ENCODE measurements at regions of chr2 and their contacts with region 1.

Region 1: GRCh38 chr2:24360050-24360962 is at the start of gene ITSN2:
- DNase-seq: peak; percentile 83 to 93 (median 87)
- ATAC-seq: peak; percentile 68 to 95 (median 88)
- H3K4me3 ChIP-seq: peak within 1 kb of the TSS; percentile 64 to 100 (median 96)
- H3K27ac ChIP-seq: peak within 1 kb of the TSS; percentile 79 to 99 (median 98)
- H3K4me1 ChIP-seq: peaks cover 0 to 35% (median 21%) of the 10 kb centered on the region in 12 donors
- H3K27me3 ChIP-seq: no peaks in the 10 kb centered on the region
- CTCF ChIP-seq: no peak
- POLR2A ChIP-seq: peak in 1 of 2 donors; percentile 59
- total RNA-seq, gene ITSN2: 30.6 to 55.0 (median 40.0) TPM

Region 2: GRCh38 chr2:24276349-24276899 is 83.9 kb before region 1 on chr2:
- intact Hi-C with region 1: no loop called
- DNase-seq: no peak
- ATAC-seq: peak in 1 of 4 donors; percentile 32
- H3K4me3 ChIP-seq: no peak overlapping the region
- H3K27ac ChIP-seq: no peak overlapping the region
- H3K4me1 ChIP-seq: peaks cover 0 to 31% (median 10%) of the 10 kb centered on the region in 12 donors
- H3K27me3 ChIP-seq: no peaks in the 10 kb centered on the region
- CTCF ChIP-seq: no peak
- POLR2A ChIP-seq: no peak

Region 3: DNA sequence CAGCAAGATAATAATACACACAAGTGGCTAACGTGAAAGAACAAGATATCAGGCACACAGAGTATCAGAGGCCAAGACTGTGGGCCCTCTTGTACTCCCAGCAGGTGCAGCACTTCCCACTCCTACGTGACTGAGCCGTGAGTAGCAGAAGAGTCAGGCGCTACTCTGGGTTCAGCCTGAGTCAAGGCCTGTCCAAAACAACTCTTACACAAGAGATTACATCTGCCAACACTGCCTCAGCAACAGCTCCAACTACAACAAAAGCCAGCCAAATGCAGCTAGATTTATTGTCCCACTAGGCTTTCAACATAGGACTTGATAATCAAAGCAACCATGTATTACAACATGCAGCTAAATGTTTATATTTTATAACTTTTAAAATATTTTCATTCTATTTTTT is 56.2 kb before region 1 on chr2:
- intact Hi-C with region 1: loop called in 2 of 10 experiments (anchors 5 to 10 kb)
- DNase-seq: peak; percentile 61 to 90 (median 67)
- ATAC-seq: peak; percentile 99 to 100 (median 100)
- H3K4me3 ChIP-seq: no peak overlapping the region
- H3K27ac ChIP-seq: peak overlapping the region in 11 of 12 donors; percentile 18 to 79 (median 35)
- H3K4me1 ChIP-seq: peaks cover 0 to 17% (median 7%) of the 10 kb centered on the region in 12 donors
- H3K27me3 ChIP-seq: no peaks in the 10 kb centered on the region
- CTCF ChIP-seq: no peak
- POLR2A ChIP-seq: no peak

Region 4: GRCh38 chr2:24385366-24385765 is 25.1 kb after region 1 on chr2:
- intact Hi-C with region 1: no loop called
- DNase-seq: no peak
- ATAC-seq: no peak
- H3K4me3 ChIP-seq: no peak overlapping the region
- H3K27ac ChIP-seq: no peak overlapping the region
- H3K4me1 ChIP-seq: peaks cover 0 to 5% (median 0%) of the 10 kb centered on the region in 12 donors
- H3K27me3 ChIP-seq: no peaks in the 10 kb centered on the region
- CTCF ChIP-seq: no peak
- POLR2A ChIP-seq: no peak

Measured in heart left ventricle (tissue), 16 donors.